Panc1 (cell line): ENCODE measurements at regions of chr2 and their contacts with region 1.

Region 1: DNA sequence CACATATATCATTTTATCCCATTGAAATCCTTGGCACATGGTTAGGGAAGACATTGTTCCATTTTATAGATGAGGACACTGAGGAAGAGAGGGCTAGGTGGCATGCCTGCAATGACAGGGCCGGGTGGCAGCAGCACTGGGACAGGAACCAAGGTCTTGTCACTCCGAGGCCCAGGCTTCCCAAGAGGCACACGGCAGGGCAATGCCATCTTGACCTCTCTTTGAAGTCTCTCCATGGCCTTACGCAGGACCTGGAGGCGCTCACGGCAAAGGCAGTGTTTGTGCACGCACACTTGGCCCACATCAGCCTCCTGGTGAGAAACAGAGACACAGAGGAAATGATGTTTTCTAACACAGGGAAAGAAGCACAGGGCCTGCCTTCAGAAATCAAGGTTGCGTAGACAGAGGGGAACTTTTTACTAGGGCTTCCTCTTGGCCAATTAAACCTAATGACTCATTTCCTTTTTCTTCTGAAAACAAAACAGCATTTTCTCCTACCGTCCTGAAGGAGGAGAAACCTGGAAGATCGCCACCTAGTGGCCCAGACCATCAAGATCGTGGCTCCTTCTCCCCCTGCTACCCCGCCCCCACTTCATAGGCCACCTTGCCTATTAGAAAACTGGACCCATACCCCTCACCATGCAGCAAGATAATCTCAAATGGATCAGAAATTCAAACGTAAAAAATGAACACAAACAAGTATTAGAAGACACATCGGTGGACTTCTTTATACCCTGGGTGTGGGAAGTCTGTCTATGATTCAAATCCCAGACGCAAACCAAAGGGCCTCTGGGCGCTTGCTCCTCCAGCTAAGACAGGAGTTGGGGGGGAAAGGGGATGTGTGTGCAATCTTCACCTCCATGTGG is 74.6 kb upstream of the SP3 start:
- DNase-seq: peak; percentile 81
- ATAC-seq: peak; percentile 97
- H3K4me3 ChIP-seq: peak overlapping the region in 1 of 2 experiments; percentile 40; a peak in 2 of 4 replicates
- H3K27ac ChIP-seq: peak overlapping the region; percentile 78
- H3K4me1 ChIP-seq: peaks cover 9% of the 10 kb centered on the region
- H3K27me3 ChIP-seq: no peaks in the 10 kb centered on the region
- CTCF ChIP-seq: peak; percentile 89

Region 2: GRCh38 chr2:173286153-173286809 is 753.5 kb before region 1 on chr2:
- CTCF ChIA-PET with region 1: interaction called, 10 read pairs
- POLR2A ChIA-PET with region 1: no interaction called
- in situ Hi-C with region 1: no loop called
- intact Hi-C with region 1: no loop called
- DNase-seq: no peak
- ATAC-seq: no peak
- H3K4me3 ChIP-seq: no peak overlapping the region
- H3K27ac ChIP-seq: no peak overlapping the region
- H3K4me1 ChIP-seq: no peaks in the 10 kb centered on the region
- H3K27me3 ChIP-seq: no peaks in the 10 kb centered on the region
- CTCF ChIP-seq: peak; percentile 57

Region 3: GRCh38 chr2:174395284-174395968 is 355.6 kb after region 1 on chr2 and contains the start of gene SCRN3:
- CTCF ChIA-PET with region 1: no interaction called
- POLR2A ChIA-PET with region 1: no interaction called
- in situ Hi-C with region 1: no loop called
- intact Hi-C with region 1: no loop called
- DNase-seq: peak; percentile 59
- ATAC-seq: peak; percentile 99
- H3K4me3 ChIP-seq: peak within 1 kb of the TSS; percentile 91 to 100
- H3K27ac ChIP-seq: peak within 1 kb of the TSS; percentile 95
- H3K4me1 ChIP-seq: peaks cover 13% of the 10 kb centered on the region
- H3K27me3 ChIP-seq: no peaks in the 10 kb centered on the region
- CTCF ChIP-seq: no peak
- total RNA-seq, gene SCRN3: 16.2 TPM